Activated T-helper 1 cell treated with anti-CD3 and anti-CD28 coated beads, Interleukin-12 subunit alpha, Interleukin-12 subunit beta, Interleukin-2, Interleukin-4 antibody, amounts not matched to agents 30 ng/mL and 10 ng/mL and 1 ng/mL, durations not matched to agents 14 hours and 24 hours and 36 hours (primary cell): ENCODE measurements at regions of chr7 and their contacts with region 1.

Region 1: GRCh38 chr7:100673300-100673941 is at the start of gene GNB2:
- DNase-seq: peak; percentile 99
- H3K4me3 Mint-ChIP-seq: peak within 1 kb of the TSS; percentile 98
- H3K27ac Mint-ChIP-seq: peak within 1 kb of the TSS; percentile 94
- H3K4me1 Mint-ChIP-seq: peaks cover 10% of the 10 kb centered on the region
- H3K27me3 Mint-ChIP-seq: peaks cover 10% of the 10 kb centered on the region
- total RNA-seq, gene GNB2: 218 and 221 TPM in 2 replicates

Region 2: DNA sequence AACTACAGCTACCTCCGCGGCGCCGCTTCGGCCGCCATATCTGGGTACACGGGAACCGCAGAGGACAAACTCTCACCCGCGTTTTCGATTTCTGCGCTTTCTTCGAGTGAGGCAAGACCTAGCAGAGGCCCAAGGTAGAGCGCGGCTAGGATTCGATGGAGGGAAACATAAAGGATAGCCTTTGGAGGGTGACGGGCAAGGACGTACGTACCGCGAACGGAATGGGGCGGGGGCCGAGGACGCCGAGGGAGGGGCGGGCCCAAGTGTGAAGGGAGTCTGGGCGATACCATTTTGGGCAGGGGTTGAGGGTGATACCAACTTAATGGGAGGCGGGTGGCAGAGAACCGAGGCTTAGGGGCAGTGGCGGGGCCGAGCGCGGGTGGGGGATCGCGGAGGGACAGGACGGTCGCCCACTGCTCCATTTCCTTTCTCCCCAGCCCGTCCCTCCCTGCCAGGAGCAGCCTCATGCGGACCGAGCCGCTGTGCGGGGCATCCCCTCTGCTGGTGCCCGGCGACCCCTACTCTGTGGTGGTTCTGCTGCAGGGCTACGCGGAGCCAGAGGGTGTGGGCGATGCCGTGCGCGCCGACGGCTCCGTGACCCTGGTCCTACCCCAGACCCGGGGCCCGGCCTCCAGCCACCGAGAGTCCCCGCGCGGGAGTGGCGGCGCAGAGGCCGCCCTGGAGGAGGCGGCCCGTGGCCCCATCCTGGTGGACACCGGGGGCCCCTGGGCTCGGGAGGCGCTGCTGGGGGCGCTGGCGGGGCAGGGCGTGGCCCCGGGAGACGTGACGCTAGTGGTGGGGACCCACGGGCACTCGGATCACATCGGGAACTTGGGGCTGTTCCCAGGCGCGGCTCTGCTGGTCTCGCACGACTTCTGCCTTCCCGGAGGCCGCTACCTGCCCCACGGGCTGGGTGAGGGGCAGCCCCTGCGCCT is 546.2 kb before region 1 on chr7 and contains the start of gene MBLAC1:
- intact Hi-C with region 1: loop called (anchors 10 kb)
- DNase-seq: peak; percentile 85
- H3K4me3 Mint-ChIP-seq: peak within 1 kb of the TSS; percentile 94
- H3K27ac Mint-ChIP-seq: peak within 1 kb of the TSS; percentile 95
- H3K4me1 Mint-ChIP-seq: peaks cover 20% of the 10 kb centered on the region
- H3K27me3 Mint-ChIP-seq: no peaks in the 10 kb centered on the region
- total RNA-seq, gene MBLAC1: 4.1 and 5.5 TPM in 2 replicates

Region 3: GRCh38 chr7:100384628-100385294 is 288.7 kb before region 1 on chr7:
- intact Hi-C with region 1: no loop called
- DNase-seq: no peak
- H3K4me3 Mint-ChIP-seq: no peak overlapping the region
- H3K27ac Mint-ChIP-seq: no peak overlapping the region
- H3K4me1 Mint-ChIP-seq: peaks cover 5% of the 10 kb centered on the region
- H3K27me3 Mint-ChIP-seq: peaks cover 14% of the 10 kb centered on the region

Region 4: GRCh38 chr7:100538654-100539435 is 134.6 kb before region 1 on chr7 and contains the start of gene AGFG2:
- intact Hi-C with region 1: loop called (anchors 1 kb)
- DNase-seq: peak; percentile 100
- H3K4me3 Mint-ChIP-seq: peak within 1 kb of the TSS; percentile 98
- H3K27ac Mint-ChIP-seq: peak within 1 kb of the TSS; percentile 85
- H3K4me1 Mint-ChIP-seq: peaks cover 44% of the 10 kb centered on the region
- H3K27me3 Mint-ChIP-seq: no peaks in the 10 kb centered on the region
- total RNA-seq, gene AGFG2: 113 and 124 TPM in 2 replicates

Region 5: GRCh38 chr7:100611974-100612729 is 61.3 kb before region 1 on chr7 and contains the start of gene MOSPD3:
- intact Hi-C with region 1: loop called (anchors 1 kb)
- DNase-seq: peak; percentile 97
- H3K4me3 Mint-ChIP-seq: peak within 1 kb of the TSS; percentile 98
- H3K27ac Mint-ChIP-seq: peak within 1 kb of the TSS; percentile 100
- H3K4me1 Mint-ChIP-seq: peaks cover 22% of the 10 kb centered on the region
- H3K27me3 Mint-ChIP-seq: peaks cover 8% of the 10 kb centered on the region
- total RNA-seq, gene MOSPD3: 10.3 and 11.5 TPM in 2 replicates

Region 6: DNA sequence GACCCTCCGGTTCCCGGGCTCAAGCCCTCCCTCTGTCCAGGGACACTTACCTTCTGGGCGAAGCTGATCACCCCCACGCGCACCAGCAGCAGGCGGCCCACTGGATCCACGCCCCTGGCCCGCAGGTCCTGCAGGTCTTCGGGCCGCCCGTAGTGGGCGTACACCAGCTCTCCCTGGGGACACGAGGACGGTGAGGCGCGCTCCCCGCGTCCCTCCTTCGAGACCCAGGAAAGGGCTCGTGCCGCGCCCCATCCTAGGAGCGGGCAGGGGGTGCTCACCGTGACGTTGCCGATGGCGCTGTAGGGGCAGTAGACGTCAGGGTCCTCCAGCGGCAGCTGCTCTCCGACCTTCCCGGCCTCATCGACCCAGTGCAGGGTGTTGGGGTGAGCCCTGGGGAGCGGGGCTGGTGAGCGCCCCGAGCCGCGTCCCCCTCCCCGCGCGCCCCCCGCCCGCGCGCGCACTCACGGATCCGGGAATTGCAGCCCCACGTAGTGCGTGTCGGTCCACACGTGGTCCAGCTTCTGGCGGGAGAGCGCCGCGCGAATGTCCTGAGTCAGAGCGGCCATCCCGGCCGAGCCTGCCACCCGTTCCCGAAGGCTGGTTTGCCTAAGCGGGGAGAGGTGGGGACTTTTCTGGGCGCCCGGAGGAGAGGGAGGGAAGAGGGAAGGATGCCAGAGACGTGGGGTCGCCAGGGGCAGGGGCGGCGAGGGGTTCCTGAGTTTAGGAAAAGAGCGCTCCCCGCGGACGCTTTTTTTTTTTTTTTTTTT is 40.3 kb before region 1 on chr7:
- intact Hi-C with region 1: loop called (anchors 1 kb)
- DNase-seq: peak; percentile 57
- H3K4me3 Mint-ChIP-seq: peak overlapping the region; percentile 92
- H3K27ac Mint-ChIP-seq: peak overlapping the region; percentile 92
- H3K4me1 Mint-ChIP-seq: peaks cover 21% of the 10 kb centered on the region
- H3K27me3 Mint-ChIP-seq: no peaks in the 10 kb centered on the region

Region 7: GRCh38 chr7:100691676-100692577 is 18.5 kb after region 1 on chr7:
- intact Hi-C with region 1: loop called (anchors 1 kb)
- DNase-seq: peak; percentile 74
- H3K4me3 Mint-ChIP-seq: peak overlapping the region; percentile 94
- H3K27ac Mint-ChIP-seq: peak overlapping the region; percentile 45
- H3K4me1 Mint-ChIP-seq: peaks cover 27% of the 10 kb centered on the region
- H3K27me3 Mint-ChIP-seq: peaks cover 16% of the 10 kb centered on the region

Region 8: DNA sequence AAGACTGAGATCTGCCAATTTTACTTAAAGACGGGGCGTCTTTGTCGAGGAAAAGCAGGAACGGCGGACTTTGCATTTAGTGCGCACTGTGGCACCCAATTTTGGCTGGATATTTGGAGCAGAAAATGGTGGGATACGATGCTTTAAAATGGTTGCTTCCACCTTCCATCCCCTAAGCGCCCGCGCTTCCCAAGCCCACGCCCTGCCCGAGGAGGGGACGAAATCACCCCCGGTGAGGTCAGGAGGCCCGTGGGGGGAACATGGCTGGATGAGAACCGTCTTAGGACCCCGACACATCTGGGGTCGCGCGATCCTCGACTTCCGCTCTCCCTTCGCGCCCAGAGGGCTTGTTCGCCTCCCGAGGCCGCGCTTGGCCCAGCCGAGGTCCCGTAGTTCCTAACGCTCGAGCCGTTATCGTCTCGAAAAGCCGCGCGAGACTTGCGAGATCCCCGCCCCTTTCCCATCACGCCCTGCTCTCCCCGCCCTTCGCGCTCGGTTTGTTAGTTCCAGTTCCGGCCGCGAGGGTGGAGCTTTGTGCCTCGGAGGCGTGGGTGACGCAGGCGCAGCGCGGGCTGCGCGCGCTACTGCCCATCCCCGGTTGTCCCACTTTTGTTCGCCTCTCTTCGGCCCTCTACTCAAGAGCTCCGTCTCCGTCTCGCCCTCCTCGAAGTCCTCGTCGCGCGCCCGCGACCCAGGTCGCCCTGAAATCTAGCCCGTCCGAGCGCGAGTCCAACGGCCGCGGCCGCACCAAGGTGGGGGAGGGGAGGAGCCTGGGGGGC is 201.3 kb after region 1 on chr7 and contains the start of gene SRRT:
- intact Hi-C with region 1: loop called (anchors 1 kb)
- DNase-seq: peak; percentile 98
- H3K4me3 Mint-ChIP-seq: peak within 1 kb of the TSS; percentile 98
- H3K27ac Mint-ChIP-seq: peak within 1 kb of the TSS; percentile 97
- H3K4me1 Mint-ChIP-seq: peaks cover 40% of the 10 kb centered on the region
- H3K27me3 Mint-ChIP-seq: no peaks in the 10 kb centered on the region
- total RNA-seq, gene SRRT: 294 and 306 TPM in 2 replicates

Region 9: DNA sequence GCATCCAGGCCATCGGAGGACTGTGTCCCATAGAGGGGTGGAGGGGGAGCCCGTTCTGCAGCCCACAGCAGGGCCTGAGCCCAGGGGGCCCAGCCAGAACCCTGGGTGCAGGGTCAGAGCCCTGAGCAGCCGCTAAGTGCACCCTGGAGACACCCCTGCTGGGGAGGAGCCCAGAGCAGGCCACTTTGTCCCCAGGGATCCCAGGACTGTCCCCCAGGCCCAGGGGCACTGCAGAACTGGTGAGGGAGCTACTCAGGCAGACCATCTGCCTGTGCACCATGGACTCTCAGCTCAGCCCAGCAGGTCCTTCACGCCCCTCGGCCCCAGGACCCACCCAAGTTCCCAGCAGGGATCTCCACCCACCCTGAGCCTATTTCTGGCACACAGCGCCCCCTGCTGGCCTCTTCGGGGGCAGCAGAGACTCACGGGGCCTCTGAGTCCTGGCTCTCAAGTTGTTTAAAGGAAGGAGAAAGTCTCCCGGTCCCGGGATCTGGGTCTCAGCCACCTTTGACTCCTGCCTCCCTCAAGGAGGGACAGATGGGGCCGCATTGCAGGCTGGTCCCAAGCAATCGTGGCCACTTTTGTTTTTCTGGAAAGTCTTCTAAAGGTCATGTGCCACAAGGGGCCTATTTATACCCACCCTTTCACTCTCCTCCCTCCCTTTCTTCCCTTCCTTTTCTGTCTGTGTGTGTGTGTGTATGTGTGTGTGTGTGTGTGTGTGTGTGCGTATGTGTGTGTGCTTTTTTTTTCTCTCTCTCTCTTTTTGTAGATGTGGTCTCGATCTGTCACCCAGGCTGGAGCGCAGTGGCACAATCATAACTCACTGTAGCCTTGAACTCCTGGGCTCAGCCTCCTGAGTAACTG is 865.4 kb after region 1 on chr7:
- intact Hi-C with region 1: no loop called
- DNase-seq: peak; percentile 31
- H3K4me3 Mint-ChIP-seq: no peak overlapping the region
- H3K27ac Mint-ChIP-seq: no peak overlapping the region
- H3K4me1 Mint-ChIP-seq: no peaks in the 10 kb centered on the region
- H3K27me3 Mint-ChIP-seq: no peaks in the 10 kb centered on the region